HEK293 (cell line): ENCODE measurements at regions of chr19 and their contacts with region 1.

Region 1: GRCh38 chr19:41837981-41838708 is 6.3 kb downstream of the LYPD4 start:
- H3K4me3 ChIP-seq: no peak overlapping the region
- H3K27ac ChIP-seq: no peak overlapping the region
- H3K4me1 ChIP-seq: no peaks in the 10 kb centered on the region
- CTCF ChIP-seq: no peak

Region 2: GRCh38 chr19:41785653-41786052 is 52.5 kb before region 1 on chr19:
- CTCF ChIA-PET with region 1: interaction called, 126 read pairs
- POLR2A ChIA-PET with region 1: no interaction called
- H3K4me3 ChIP-seq: no peak overlapping the region
- H3K27ac ChIP-seq: no peak overlapping the region
- H3K4me1 ChIP-seq: peaks cover 3% of the 10 kb centered on the region; the same call in 1 of the 2 replicates
- CTCF ChIP-seq: peak; percentile 70

Region 3: GRCh38 chr19:41795031-41795461 is 43.1 kb before region 1 on chr19:
- CTCF ChIA-PET with region 1: interaction called, 126 read pairs
- POLR2A ChIA-PET with region 1: no interaction called
- H3K4me3 ChIP-seq: no peak overlapping the region
- H3K27ac ChIP-seq: no peak overlapping the region
- H3K4me1 ChIP-seq: no peaks in the 10 kb centered on the region
- CTCF ChIP-seq: peak; percentile 79

Region 4: GRCh38 chr19:41811036-41811435 is 27.1 kb before region 1 on chr19:
- CTCF ChIA-PET with region 1: interaction called, 27 read pairs
- POLR2A ChIA-PET with region 1: no interaction called
- H3K4me3 ChIP-seq: no peak overlapping the region
- H3K27ac ChIP-seq: no peak overlapping the region
- H3K4me1 ChIP-seq: no peaks in the 10 kb centered on the region
- CTCF ChIP-seq: no peak

Region 5: GRCh38 chr19:41821003-41821735 is 17.0 kb before region 1 on chr19:
- CTCF ChIA-PET with region 1: interaction called, 98 read pairs
- POLR2A ChIA-PET with region 1: no interaction called
- H3K4me3 ChIP-seq: no peak overlapping the region
- H3K27ac ChIP-seq: no peak overlapping the region
- H3K4me1 ChIP-seq: no peaks in the 10 kb centered on the region
- CTCF ChIP-seq: peak; percentile 86

Region 6: GRCh38 chr19:41853344-41854167 is 15.4 kb after region 1 on chr19:
- CTCF ChIA-PET with region 1: interaction called, 49 read pairs
- POLR2A ChIA-PET with region 1: interaction called, 4 read pairs
- H3K4me3 ChIP-seq: no peak overlapping the region
- H3K27ac ChIP-seq: no peak overlapping the region
- H3K4me1 ChIP-seq: no peaks in the 10 kb centered on the region
- CTCF ChIP-seq: no peak

Region 7: DNA sequence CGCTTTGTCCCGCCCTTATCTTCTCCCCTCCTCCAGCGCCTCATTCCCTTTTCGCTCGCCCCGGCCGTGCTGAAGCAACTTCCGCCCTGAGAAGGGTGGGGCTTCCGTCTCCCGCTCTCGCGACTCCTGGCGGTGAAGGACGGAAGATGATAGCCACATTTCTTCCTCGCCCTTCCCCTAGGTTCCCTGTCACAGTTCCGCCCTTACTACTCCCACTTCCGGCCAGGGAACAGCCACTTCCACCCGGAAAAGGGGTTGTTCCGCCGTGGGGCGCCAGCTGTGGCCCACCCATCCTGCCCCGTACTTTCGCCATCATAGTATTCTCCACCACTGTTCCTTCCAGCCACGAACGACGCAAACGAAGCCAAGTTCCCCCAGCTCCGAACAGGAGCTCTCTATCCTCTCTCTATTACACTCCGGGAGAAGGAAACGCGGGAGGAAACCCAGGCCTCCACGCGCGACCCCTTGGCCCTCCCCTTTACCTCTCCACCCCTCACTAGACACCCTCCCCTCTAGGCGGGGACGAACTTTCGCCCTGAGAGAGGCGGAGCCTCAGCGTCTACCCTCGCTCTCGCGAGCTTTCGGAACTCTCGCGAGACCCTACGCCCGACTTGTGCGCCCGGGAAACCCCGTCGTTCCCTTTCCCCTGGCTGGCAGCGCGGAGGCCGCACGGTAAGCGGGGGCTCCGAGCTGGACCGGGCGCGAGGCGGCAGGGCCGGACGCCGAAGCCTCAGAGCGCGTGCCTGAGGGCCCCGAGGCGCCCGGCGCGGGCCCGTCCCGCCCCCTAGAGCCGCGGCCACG is 21.7 kb after region 1 on chr19 and contains the start of gene RPS19:
- CTCF ChIA-PET with region 1: interaction called, 34 read pairs
- POLR2A ChIA-PET with region 1: interaction called, 15 read pairs
- H3K4me3 ChIP-seq: peak within 1 kb of the TSS; percentile 89
- H3K27ac ChIP-seq: peak within 1 kb of the TSS; percentile 100
- H3K4me1 ChIP-seq: peaks cover 27% of the 10 kb centered on the region
- CTCF ChIP-seq: peak; percentile 100